Spleen (tissue), 13 donors: ENCODE measurements at regions of chr22 and their contacts with region 1.

Region 1: GRCh38 chr22:23539135-23539838 is 40.8 kb downstream of the IGLL1 start:
- DNase-seq: peak; percentile 90
- H3K4me3 ChIP-seq: peak overlapping the region in 1 of 8 donors; percentile 41
- H3K27ac ChIP-seq: peak overlapping the region in 3 of 8 donors; percentile 1 to 52 (median 9)
- H3K4me1 ChIP-seq: peaks cover 0 to 45% (median 19%) of the 10 kb centered on the region in 6 donors
- H3K27me3 ChIP-seq: no peaks in the 10 kb centered on the region
- CTCF ChIP-seq: peak; percentile 78 to 96 (median 86)
- POLR2A ChIP-seq: no peak

Region 2: DNA sequence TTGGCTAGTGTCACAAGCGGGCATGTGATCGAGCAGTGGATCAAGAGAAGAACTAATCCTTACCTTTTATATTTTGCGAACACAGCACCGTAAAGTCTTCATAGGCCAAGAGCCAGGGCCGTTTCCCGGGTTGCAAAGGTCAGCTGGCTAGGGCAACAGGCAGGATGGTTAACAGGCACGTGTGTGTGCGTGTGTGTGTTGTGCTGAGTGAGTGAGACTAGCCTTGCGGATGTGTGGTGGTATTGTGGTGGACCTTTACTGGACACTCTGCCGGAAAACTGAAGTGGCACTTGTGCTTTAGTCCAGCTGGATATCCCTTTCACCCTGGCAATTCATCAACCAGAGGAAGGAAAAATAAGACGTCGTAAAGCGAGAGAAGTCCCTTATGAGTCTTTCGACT is 182.2 kb before region 1 on chr22:
- intact Hi-C with region 1: no loop called
- DNase-seq: peak; percentile 74
- H3K4me3 ChIP-seq: no peak overlapping the region
- H3K27ac ChIP-seq: no peak overlapping the region
- H3K4me1 ChIP-seq: peaks cover 0 to 11% (median 0%) of the 10 kb centered on the region in 6 donors
- H3K27me3 ChIP-seq: peaks cover 0 to 46% (median 5%) of the 10 kb centered on the region in 7 donors
- CTCF ChIP-seq: no peak
- POLR2A ChIP-seq: no peak

Region 3: GRCh38 chr22:23402275-23403151 is 136.8 kb before region 1 on chr22:
- intact Hi-C with region 1: loop called (anchors 10 kb)
- DNase-seq: peak; percentile 88
- H3K4me3 ChIP-seq: peak overlapping the region in 6 of 8 donors; percentile 24 to 67 (median 32)
- H3K27ac ChIP-seq: no peak overlapping the region
- H3K4me1 ChIP-seq: peaks cover 0 to 12% (median 2%) of the 10 kb centered on the region in 6 donors
- H3K27me3 ChIP-seq: peaks cover 0 to 60% (median 0%) of the 10 kb centered on the region in 7 donors
- CTCF ChIP-seq: peak in 9 of 11 experiments; percentile 23 to 73 (median 61)
- POLR2A ChIP-seq: no peak

Region 4: GRCh38 chr22:23849009-23850006 is 310.0 kb after region 1 on chr22:
- intact Hi-C with region 1: loop called (anchors 5 kb)
- DNase-seq: peak; percentile 97
- H3K4me3 ChIP-seq: peak overlapping the region in 4 of 8 donors; percentile 16 to 47 (median 18)
- H3K27ac ChIP-seq: no peak overlapping the region
- H3K4me1 ChIP-seq: peaks cover 33 to 56% (median 42%) of the 10 kb centered on the region in 6 donors
- H3K27me3 ChIP-seq: peaks cover 0 to 8% (median 0%) of the 10 kb centered on the region in 7 donors
- CTCF ChIP-seq: peak; percentile 87 to 99 (median 97)
- POLR2A ChIP-seq: no peak